ENCODE measurements at regions of chr2 and their contacts with region 1.

Region 1: GRCh38 chr2:166539340-166540162 is 45.5 kb upstream of the SCN7A start:
- DNase-seq: peak; percentile 84
- ATAC-seq: peak; percentile 97
- H3K4me3 ChIP-seq: 0 out of 2 replicates have a peak overlapping the region, but pooled peaks have one; percentile 4
- H3K27ac ChIP-seq: peak overlapping the region; percentile 37; the same call in 1 of the 2 replicates
- H3K4me1 ChIP-seq: no peaks in the 10 kb centered on the region
- H3K27me3 ChIP-seq: no peaks in the 10 kb centered on the region
- CTCF ChIP-seq: peak; percentile 90
- POLR2A ChIP-seq: peak; percentile 47; the same call in 1 of the 2 replicates
- RAD21 ChIP-seq: peak; percentile 96

Region 2: GRCh38 chr2:166331468-166331867 is 208.1 kb before region 1 on chr2:
- CTCF ChIA-PET with region 1: no interaction called
- POLR2A ChIA-PET with region 1: no interaction called
- dilution Hi-C with region 1: no loop called
- in situ Hi-C with region 1: no loop called
- intact Hi-C with region 1: no loop called
- DNase-seq: peak; percentile 44
- ATAC-seq: no peak; the same call in 1 of the 2 replicates
- H3K4me3 ChIP-seq: no peak overlapping the region
- H3K27ac ChIP-seq: no peak overlapping the region
- H3K4me1 ChIP-seq: peaks cover 6% of the 10 kb centered on the region
- H3K27me3 ChIP-seq: no peaks in the 10 kb centered on the region
- CTCF ChIP-seq: no peak
- POLR2A ChIP-seq: no peak
- RAD21 ChIP-seq: no peak

Region 3: GRCh38 chr2:166805753-166806152 is 266.2 kb after region 1 on chr2:
- CTCF ChIA-PET with region 1: no interaction called
- POLR2A ChIA-PET with region 1: no interaction called
- dilution Hi-C with region 1: no loop called
- in situ Hi-C with region 1: no loop called
- intact Hi-C with region 1: loop called (anchors 2 kb)
- DNase-seq: no peak
- ATAC-seq: no peak
- H3K4me3 ChIP-seq: no peak overlapping the region
- H3K27ac ChIP-seq: no peak overlapping the region
- H3K4me1 ChIP-seq: 0 out of 2 replicates have a peak, but pooled peaks cover 2% of the 10 kb centered on the region
- H3K27me3 ChIP-seq: no peaks in the 10 kb centered on the region
- CTCF ChIP-seq: no peak
- POLR2A ChIP-seq: no peak
- RAD21 ChIP-seq: no peak

Region 4: GRCh38 chr2:167212014-167212648 is 672.6 kb after region 1 on chr2:
- CTCF ChIA-PET with region 1: interaction called, 5 read pairs
- POLR2A ChIA-PET with region 1: no interaction called
- dilution Hi-C with region 1: no loop called
- in situ Hi-C with region 1: no loop called
- intact Hi-C with region 1: loop called (anchors 1 kb)
- DNase-seq: peak; percentile 66
- ATAC-seq: peak; percentile 70
- H3K4me3 ChIP-seq: no peak overlapping the region
- H3K27ac ChIP-seq: no peak overlapping the region
- H3K4me1 ChIP-seq: no peaks in the 10 kb centered on the region
- H3K27me3 ChIP-seq: no peaks in the 10 kb centered on the region
- CTCF ChIP-seq: peak; percentile 77
- POLR2A ChIP-seq: no peak
- RAD21 ChIP-seq: peak; percentile 89

Region 5: GRCh38 chr2:167550448-167550847 is 1010.9 kb after region 1 on chr2:
- CTCF ChIA-PET with region 1: no interaction called
- POLR2A ChIA-PET with region 1: no interaction called
- dilution Hi-C with region 1: no loop called
- in situ Hi-C with region 1: no loop called
- intact Hi-C with region 1: loop called (anchors 10 kb)
- DNase-seq: peak; percentile 27
- ATAC-seq: 0 out of 2 replicates have a peak, but pooled peaks have one; percentile 40
- H3K4me3 ChIP-seq: no peak overlapping the region
- H3K27ac ChIP-seq: no peak overlapping the region
- H3K4me1 ChIP-seq: no peaks in the 10 kb centered on the region; the same call in 1 of the 2 replicates
- H3K27me3 ChIP-seq: no peaks in the 10 kb centered on the region
- CTCF ChIP-seq: peak; percentile 42; the same call in 1 of the 2 replicates
- POLR2A ChIP-seq: no peak
- RAD21 ChIP-seq: peak; percentile 39

Measured in IMR-90 (cell line).